Left ventricle myocardium superior (tissue), 1 donor: ENCODE measurements at regions of chr15 and their contacts with region 1.

Region 1: DNA sequence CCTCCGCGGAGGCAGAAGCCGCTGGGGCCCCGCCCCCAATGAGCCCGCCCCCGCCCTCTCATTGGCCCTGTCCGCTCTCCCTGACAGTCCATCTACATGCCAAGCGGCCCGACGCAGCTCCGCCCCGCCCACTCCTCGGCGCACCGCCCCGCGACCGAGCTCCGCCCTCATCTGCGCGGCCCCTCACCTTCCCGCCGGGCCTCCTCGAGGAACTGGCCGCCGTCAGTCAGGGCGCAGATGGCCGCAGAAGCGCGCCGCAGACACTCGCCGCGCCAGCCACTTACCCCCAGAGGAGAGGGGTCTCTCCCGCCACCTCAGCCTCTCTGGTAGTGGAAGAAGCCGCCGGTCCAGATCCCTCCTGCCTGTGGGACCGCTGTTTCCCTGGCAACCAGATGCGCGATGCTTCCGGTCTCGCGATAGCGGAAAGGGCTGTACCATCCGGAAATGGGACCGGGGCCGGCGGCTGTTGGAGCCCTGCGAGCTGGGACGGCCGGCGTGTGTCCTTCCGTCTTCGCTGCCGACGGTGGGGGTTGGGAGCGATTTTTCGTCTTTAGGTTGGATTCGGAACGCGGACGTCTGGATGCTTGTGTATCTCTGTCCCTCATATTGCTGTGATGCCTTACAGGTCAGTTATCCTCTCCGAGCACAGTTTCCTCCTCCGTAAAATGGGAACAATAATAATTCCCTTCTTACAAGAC is at the start of gene FSIP1:
- DNase-seq: peak; percentile 97
- ATAC-seq: peak; percentile 100
- total RNA-seq, gene FSIP1: 1.0 TPM

Region 2: DNA sequence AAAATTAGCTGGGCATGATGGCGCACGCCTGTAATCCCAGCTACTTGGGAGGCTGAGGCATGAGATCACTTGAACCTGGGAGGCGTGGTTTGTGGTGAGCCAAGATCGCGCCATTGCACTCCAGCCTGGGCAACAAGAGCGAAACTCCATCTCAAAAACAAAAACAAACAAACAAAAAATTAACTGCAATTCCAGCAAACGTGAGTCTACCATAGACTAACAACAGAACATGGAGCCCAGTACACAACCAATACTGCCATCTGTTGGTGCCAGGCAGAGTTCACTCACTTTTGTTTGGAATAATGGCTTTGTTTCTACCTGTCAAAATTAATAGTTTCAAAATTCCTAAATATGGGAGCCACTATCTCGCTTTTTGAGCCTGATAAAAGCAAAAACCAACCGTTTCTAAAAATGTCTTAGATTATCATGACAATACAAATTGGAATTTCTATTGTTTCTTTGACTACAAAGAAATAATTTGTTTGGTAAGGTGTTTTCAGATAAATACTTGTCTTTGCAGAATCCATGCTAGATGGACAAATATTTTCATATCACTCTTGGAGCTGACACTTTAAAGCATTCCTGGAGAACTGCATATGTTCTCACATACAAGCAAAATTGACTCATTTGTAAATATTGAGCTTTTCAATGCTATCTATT is 92.4 kb after region 1 on chr15:
- intact Hi-C with region 1: loop called (anchors 10 kb)
- DNase-seq: no peak
- ATAC-seq: no peak

Region 3: GRCh38 chr15:39934397-39935071 is 151.9 kb after region 1 on chr15:
- intact Hi-C with region 1: loop called (anchors 10 kb)
- DNase-seq: no peak
- ATAC-seq: peak; percentile 7

Region 4: GRCh38 chr15:39976291-39977274 is 194.0 kb after region 1 on chr15:
- intact Hi-C with region 1: loop called (anchors 10 kb)
- DNase-seq: peak; percentile 82
- ATAC-seq: peak; percentile 97